A673 (cell line): ENCODE measurements at regions of chr16 and their contacts with region 1.

Region 1: GRCh38 chr16:15757077-15757386 is 99.8 kb downstream of the MYH11 start:
- DNase-seq: no peak
- H3K4me3 ChIP-seq: no peak overlapping the region
- H3K27ac ChIP-seq: no peak overlapping the region
- H3K4me1 ChIP-seq: no peaks in the 10 kb centered on the region
- H3K27me3 ChIP-seq: no peaks in the 10 kb centered on the region
- CTCF ChIP-seq: no peak

Region 2: DNA sequence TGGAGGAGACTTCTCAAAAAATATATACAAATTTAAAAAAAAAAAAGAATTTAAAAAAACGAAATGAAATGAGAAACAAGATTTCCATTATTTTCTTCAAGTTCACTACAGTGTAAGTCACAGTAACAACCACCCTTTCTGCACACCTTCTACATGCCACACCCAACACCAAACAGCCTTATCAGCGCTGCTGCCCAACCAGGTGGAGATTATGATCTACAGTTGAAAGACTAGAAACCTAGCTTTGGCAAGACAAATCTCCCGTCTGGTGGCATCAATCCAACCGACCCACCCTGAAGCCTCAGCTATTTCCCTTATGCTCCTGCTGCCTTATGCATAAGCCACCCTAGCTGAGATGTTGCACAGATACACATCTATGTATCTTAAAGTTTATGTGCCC is 1187.8 kb before region 1 on chr16:
- CTCF ChIA-PET with region 1: interaction called, 10 read pairs
- POLR2A ChIA-PET with region 1: no interaction called
- intact Hi-C with region 1: no loop called
- DNase-seq: no peak
- H3K4me3 ChIP-seq: no peak overlapping the region
- H3K27ac ChIP-seq: no peak overlapping the region
- H3K4me1 ChIP-seq: peaks cover 17% of the 10 kb centered on the region
- H3K27me3 ChIP-seq: no peaks in the 10 kb centered on the region
- CTCF ChIP-seq: no peak

Region 3: DNA sequence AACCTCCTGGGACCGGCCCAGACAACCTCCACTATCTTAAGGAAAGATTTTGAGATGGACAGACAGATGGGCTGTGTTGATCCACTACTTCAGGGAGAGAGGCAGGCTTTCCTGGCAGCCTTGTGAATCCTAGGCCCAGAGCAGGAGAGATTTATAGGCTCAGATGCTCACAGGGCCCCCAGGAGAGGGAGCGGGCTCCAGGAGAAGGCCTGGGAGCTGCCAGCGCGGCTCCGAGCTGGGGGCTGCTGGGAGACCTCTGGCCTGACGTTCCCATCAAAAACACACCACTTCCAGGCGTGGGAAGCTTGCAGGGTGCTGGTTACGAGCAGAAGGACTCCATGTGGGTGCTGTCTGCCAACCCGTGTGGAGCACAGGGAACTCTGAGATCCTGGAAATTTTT is 46.6 kb after region 1 on chr16:
- CTCF ChIA-PET with region 1: no interaction called
- POLR2A ChIA-PET with region 1: no interaction called
- intact Hi-C with region 1: no loop called
- DNase-seq: no peak
- H3K4me3 ChIP-seq: no peak overlapping the region
- H3K27ac ChIP-seq: no peak overlapping the region
- H3K4me1 ChIP-seq: no peaks in the 10 kb centered on the region
- H3K27me3 ChIP-seq: no peaks in the 10 kb centered on the region
- CTCF ChIP-seq: no peak

Region 4: GRCh38 chr16:16007743-16008111 is 250.7 kb after region 1 on chr16:
- CTCF ChIA-PET with region 1: no interaction called
- POLR2A ChIA-PET with region 1: no interaction called
- intact Hi-C with region 1: no loop called
- DNase-seq: no peak
- H3K4me3 ChIP-seq: no peak overlapping the region
- H3K27ac ChIP-seq: no peak overlapping the region
- H3K4me1 ChIP-seq: peaks cover 9% of the 10 kb centered on the region
- H3K27me3 ChIP-seq: no peaks in the 10 kb centered on the region
- CTCF ChIP-seq: no peak